Mammary epithelial cell (primary cell): ENCODE measurements at regions of chr1 and their contacts with region 1.

Region 1: GRCh38 chr1:201149400-201149799 is 4.9 kb downstream of the TMEM9 start:
- DNase-seq: no peak
- H3K4me3 ChIP-seq: no peak overlapping the region
- H3K27ac ChIP-seq: no peak overlapping the region
- H3K4me1 ChIP-seq: peaks cover 7% of the 10 kb centered on the region
- H3K27me3 ChIP-seq: no peaks in the 10 kb centered on the region
- CTCF ChIP-seq: peak; percentile 56 to 58

Region 2: GRCh38 chr1:201114236-201115131 is 34.9 kb before region 1 on chr1:
- CTCF ChIA-PET with region 1: no interaction called
- dilution Hi-C with region 1: no loop called
- in situ Hi-C with region 1: no loop called
- intact Hi-C with region 1: no loop called
- DNase-seq: peak; percentile 91
- H3K4me3 ChIP-seq: peak overlapping the region; percentile 31 to 77 (median 63)
- H3K27ac ChIP-seq: no peak overlapping the region
- H3K4me1 ChIP-seq: peaks cover 3% of the 10 kb centered on the region
- H3K27me3 ChIP-seq: no peaks in the 10 kb centered on the region
- CTCF ChIP-seq: peak; percentile 80 to 92

Region 3: GRCh38 chr1:201184307-201185122 is 35.1 kb after region 1 on chr1:
- CTCF ChIA-PET with region 1: no interaction called
- dilution Hi-C with region 1: no loop called
- in situ Hi-C with region 1: no loop called
- intact Hi-C with region 1: loop called (anchors 1 kb)
- DNase-seq: peak; percentile 67
- H3K4me3 ChIP-seq: no peak overlapping the region
- H3K27ac ChIP-seq: no peak overlapping the region
- H3K4me1 ChIP-seq: peaks cover 12% of the 10 kb centered on the region
- H3K27me3 ChIP-seq: no peaks in the 10 kb centered on the region
- CTCF ChIP-seq: peak; percentile 67 to 79

Region 4: GRCh38 chr1:201191653-201192260 is 42.4 kb after region 1 on chr1:
- CTCF ChIA-PET with region 1: interaction called, 11 read pairs
- dilution Hi-C with region 1: no loop called
- in situ Hi-C with region 1: no loop called
- intact Hi-C with region 1: no loop called
- DNase-seq: peak; percentile 92
- H3K4me3 ChIP-seq: no peak overlapping the region
- H3K27ac ChIP-seq: no peak overlapping the region
- H3K4me1 ChIP-seq: peaks cover 33% of the 10 kb centered on the region
- H3K27me3 ChIP-seq: no peaks in the 10 kb centered on the region
- CTCF ChIP-seq: no peak